ENCODE measurements at regions of chr7 and their contacts with region 1.

Region 1: DNA sequence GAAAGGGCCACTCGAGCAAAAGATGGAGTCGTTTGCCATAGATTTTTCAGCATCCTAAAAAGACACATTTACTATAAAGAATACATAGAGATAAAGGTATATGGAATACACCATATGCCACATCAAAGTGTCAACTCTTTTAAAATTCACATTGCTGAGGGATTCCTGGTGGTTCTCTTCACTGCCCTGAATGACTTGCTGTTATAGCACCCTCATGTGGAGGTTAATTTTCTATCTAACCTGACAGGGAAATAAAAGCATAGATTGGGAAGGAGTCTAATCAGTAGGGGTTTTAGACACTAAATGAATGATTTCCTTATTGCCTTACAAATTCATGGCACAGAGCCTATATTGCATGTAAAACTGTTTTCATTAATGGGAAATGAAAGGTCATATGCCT is 25.9 kb downstream of the DNAH11 start:
- DNase-seq: peak; percentile 2
- ATAC-seq: no peak; the same call in 2 of the 3 replicates
- H3K4me3 ChIP-seq: no peak overlapping the region
- H3K27ac ChIP-seq: no peak overlapping the region
- H3K4me1 ChIP-seq: no peaks in the 10 kb centered on the region
- H3K27me3 ChIP-seq: 0 out of 5 replicates have a peak, but pooled peaks cover 0 to 5% of the 10 kb centered on the region in 2 experiments
- CTCF ChIP-seq: peak; percentile 35
- EP300 ChIP-seq: no peak
- POLR2A ChIP-seq: no peak
- RAD21 ChIP-seq: no peak

Region 2: GRCh38 chr7:21251151-21251800 is 317.5 kb before region 1 on chr7:
- CTCF ChIA-PET with region 1: no interaction called
- POLR2A ChIA-PET with region 1: no interaction called
- in situ Hi-C with region 1: no loop called
- intact Hi-C with region 1: no loop called
- DNase-seq: peak; percentile 65
- ATAC-seq: peak; percentile 92
- H3K4me3 ChIP-seq: no peak overlapping the region
- H3K27ac ChIP-seq: no peak overlapping the region
- H3K4me1 ChIP-seq: peaks cover 5% of the 10 kb centered on the region; the same call in 1 of the 2 replicates
- H3K27me3 ChIP-seq: peaks cover 0 to 11% of the 10 kb centered on the region in 2 experiments; a peak in 1 of 5 replicates
- CTCF ChIP-seq: no peak
- EP300 ChIP-seq: no peak
- POLR2A ChIP-seq: no peak
- RAD21 ChIP-seq: no peak

Region 3: GRCh38 chr7:21261627-21262594 is 306.9 kb before region 1 on chr7:
- CTCF ChIA-PET with region 1: no interaction called
- POLR2A ChIA-PET with region 1: no interaction called
- in situ Hi-C with region 1: no loop called
- intact Hi-C with region 1: loop called (anchors 2 kb)
- DNase-seq: peak; percentile 32
- ATAC-seq: peak; percentile 96
- H3K4me3 ChIP-seq: no peak overlapping the region
- H3K27ac ChIP-seq: no peak overlapping the region
- H3K4me1 ChIP-seq: no peaks in the 10 kb centered on the region
- H3K27me3 ChIP-seq: no peaks in the 10 kb centered on the region
- CTCF ChIP-seq: peak; percentile 64
- EP300 ChIP-seq: no peak
- POLR2A ChIP-seq: no peak
- RAD21 ChIP-seq: peak; percentile 43; the same call in 1 of the 2 replicates

Region 4: GRCh38 chr7:21300692-21301091 is 268.1 kb before region 1 on chr7:
- CTCF ChIA-PET with region 1: no interaction called
- POLR2A ChIA-PET with region 1: no interaction called
- in situ Hi-C with region 1: no loop called
- intact Hi-C with region 1: loop called (anchors 5 kb)
- DNase-seq: peak; percentile 6
- ATAC-seq: peak; percentile 73
- H3K4me3 ChIP-seq: no peak overlapping the region
- H3K27ac ChIP-seq: no peak overlapping the region
- H3K4me1 ChIP-seq: no peaks in the 10 kb centered on the region
- H3K27me3 ChIP-seq: no peaks in the 10 kb centered on the region
- CTCF ChIP-seq: 0 out of 2 replicates have a peak, but pooled peaks have one; percentile 30
- EP300 ChIP-seq: no peak
- POLR2A ChIP-seq: no peak
- RAD21 ChIP-seq: no peak